BJ (cell line): ENCODE measurements at regions of chr10 and their contacts with region 1.

Region 1: DNA sequence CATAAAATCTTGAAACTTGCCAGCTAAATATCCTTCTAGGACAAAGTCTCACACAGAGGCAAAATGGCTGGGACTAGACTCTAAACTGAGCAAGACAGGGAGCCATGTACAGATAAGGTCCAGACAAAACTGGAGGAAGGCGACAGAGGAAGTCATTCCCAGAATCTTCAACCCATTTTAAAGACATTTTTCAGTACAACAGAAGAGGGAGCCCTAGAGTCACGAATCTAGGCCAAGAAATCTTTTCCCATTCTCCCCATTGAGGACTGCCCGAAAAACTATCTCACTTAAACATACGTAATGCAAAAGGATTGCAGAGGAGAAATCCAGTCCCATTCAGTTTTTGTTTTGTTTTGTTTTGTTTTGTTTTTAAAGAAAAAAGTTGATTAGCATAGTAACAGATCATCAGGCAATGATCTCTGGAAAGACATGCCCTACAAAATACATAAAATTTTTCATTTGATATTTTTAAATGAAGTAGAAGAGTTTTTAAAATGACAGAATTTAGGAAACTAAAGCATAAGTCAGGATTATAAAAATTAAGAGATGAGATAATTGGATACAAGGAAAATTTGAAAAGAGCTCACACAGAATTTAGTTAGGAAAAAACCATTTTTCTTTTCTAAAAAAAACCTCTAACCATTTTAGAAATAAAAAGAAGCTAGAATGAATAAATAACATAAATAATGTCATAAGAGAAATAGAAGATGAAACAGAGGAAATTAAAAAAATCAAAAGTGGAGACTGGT is 16.9 kb upstream of the PRF1 start:
- DNase-seq: no peak
- H3K4me3 ChIP-seq: no peak overlapping the region
- H3K27me3 ChIP-seq: peaks cover 7% of the 10 kb centered on the region; the same call in 1 of the 2 replicates
- CTCF ChIP-seq: peak; percentile 42; the same call in 1 of the 2 replicates

Region 2: DNA sequence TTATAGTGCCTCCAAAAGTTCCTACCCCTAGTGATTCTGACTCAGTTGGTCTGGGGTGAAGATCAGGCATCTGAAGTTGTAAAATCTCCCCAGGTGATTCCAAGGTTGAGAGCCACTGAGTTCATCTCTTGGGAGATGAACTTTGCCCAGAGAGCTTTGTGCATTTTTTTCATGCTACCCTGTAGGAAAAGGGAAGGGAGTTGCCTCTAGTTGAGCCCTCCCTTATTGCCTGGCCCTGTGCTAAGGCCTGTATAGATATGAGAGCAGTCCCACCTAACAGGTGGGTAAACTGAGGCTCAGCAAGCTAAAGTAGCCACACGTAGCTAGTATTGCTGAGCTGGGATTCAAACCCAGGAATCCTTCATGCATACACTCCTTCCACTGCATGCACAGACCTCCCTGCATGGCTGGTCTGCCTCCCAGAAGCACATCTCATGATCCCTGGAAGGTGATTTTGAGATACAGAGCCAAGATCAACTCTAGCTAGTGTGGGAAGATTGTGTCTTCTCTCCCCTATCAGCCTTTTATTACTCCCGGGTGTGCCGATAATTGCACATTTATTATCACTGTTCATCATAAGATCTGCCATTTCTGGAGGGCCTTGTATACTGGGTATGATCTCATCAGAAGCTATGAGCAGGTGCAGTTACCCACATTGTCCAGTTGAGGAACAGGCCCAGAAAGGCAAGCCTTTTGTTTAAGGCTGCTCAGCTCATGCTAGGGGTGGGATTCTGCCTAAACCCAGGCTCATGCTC is 118.7 kb after region 1 on chr10:
- CTCF ChIA-PET with region 1: interaction called, 3 read pairs
- POLR2A ChIA-PET with region 1: interaction called, 22 read pairs
- DNase-seq: no peak
- H3K4me3 ChIP-seq: no peak overlapping the region
- H3K27me3 ChIP-seq: peaks cover 1% of the 10 kb centered on the region; the same call in 1 of the 2 replicates
- CTCF ChIP-seq: 0 out of 2 replicates have a peak, but pooled peaks have one; percentile 19